ENCODE measurements at regions of chr1 and their contacts with region 1.

Region 1: DNA sequence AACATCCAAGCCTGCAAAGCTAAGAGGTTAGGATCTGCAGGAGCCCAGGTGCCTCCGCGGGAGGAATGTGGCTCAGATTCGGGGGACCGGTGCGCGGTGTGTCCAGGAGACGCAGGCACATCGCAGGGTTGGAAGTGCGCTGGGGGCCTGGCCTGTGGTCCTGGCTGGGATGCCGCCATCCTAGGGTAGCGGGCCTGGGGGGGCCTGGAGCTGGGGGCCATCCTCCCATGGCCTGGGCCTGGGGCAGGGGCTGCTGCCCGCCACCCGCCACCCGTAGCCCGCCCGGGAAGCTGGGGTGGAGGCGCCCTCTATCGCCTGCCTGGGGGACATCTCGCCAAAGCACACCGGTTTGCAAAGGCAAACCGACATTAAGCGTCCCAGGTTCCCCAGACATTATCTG is 170.6 kb upstream of the ARHGEF16 start:
- DNase-seq: no peak

Region 2: DNA sequence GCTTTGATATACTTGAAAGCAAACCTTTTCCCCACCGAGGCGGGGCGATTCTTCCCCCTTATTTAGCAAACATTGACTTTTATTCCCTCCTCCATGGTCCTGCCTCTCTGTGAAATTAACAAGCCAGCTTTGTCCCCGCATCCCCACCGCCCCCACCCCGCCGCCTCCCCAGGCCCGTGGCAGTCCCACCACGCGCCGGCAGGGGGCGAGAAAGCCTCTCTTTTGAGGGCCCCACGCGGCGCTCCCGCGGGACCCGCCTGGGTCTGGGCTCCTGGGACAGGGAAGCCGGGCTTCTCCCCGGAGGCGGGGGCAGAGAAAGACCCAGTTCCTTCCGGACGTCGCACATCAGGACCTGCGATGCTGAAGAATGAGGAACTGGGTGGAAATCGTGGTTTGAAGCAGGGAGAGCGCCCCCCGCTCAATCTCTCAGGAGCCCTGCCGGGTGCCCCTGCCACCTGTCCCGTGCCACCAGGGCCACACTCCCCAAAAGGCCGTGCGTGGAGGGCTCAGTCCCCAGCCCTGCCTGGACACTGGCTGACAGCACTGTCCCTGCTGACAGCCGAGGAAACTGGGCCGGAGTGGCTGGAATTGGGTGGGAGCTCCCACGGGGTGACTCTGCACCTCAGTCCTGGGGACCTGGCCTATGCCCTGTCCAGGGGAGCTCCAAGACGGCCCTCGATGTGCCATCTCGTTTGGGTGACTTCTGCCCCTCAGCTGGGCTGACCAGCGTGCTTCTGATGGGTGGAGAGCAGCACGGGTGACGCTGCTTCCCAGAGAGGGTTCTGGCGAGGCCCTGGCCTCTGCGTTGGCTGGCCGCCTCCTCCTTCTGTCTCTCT is 271.2 kb before region 1 on chr1:
- intact Hi-C with region 1: loop called (anchors 2 kb)
- DNase-seq: peak; percentile 63

Region 3: DNA sequence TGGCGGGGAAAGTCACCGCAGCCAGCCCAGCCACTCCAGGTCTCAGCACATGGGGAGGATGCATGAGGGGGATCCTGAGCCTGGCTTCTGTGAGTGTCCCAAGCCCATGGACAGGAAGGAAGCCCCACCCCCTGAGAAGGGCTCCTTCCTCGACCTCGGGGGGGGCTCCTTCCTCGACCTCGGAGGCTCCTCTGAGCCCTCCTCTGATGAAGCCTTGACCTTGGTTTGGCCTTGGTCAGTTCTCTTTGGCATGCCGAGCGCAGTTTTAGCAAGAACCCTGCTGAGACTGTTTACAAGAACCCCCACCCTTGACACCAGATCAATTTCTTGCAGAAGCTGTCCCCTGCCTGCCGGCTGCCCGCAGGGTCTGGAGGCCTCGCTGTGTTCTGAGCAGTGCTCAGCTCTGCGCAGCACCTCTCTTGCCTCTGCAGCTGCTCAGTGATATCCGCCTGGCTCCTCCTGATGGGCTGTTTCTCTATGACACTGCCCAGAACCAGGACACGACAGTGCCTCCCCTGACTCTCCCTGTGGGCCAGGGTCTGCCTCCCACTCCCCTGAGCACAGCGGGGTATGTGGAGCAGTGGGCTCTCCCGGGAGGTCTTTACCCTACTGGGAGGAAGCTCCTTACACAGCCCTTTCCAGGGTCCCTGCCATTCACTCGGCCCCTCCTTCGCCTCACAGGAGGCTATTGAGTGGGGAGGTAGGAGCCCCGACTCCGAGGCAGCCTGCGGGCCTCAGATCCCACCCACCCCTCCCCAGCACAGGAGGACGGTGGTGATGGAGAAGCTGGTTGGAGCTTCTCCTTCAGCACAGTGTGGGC is 247.2 kb before region 1 on chr1:
- intact Hi-C with region 1: no loop called
- DNase-seq: peak; percentile 58